Esophagus muscularis mucosa (tissue), 4 donors: ENCODE measurements at regions of chr6 and their contacts with region 1.

Region 1: GRCh38 chr6:99318542-99318941 is 30.9 kb downstream of the FAXC start:
- DNase-seq: no peak
- H3K4me3 ChIP-seq: no peak overlapping the region
- H3K27ac ChIP-seq: no peak overlapping the region
- H3K4me1 ChIP-seq: no peaks in the 10 kb centered on the region
- H3K27me3 ChIP-seq: no peaks in the 10 kb centered on the region
- CTCF ChIP-seq: no peak
- EP300 ChIP-seq: no peak
- POLR2A ChIP-seq: no peak

Region 2: GRCh38 chr6:99270826-99271225 is 47.7 kb before region 1 on chr6:
- intact Hi-C with region 1: no loop called
- DNase-seq: no peak
- H3K4me3 ChIP-seq: no peak overlapping the region
- H3K27ac ChIP-seq: no peak overlapping the region
- H3K4me1 ChIP-seq: peaks cover 0 to 9% (median 7%) of the 10 kb centered on the region in 4 donors
- H3K27me3 ChIP-seq: no peaks in the 10 kb centered on the region
- CTCF ChIP-seq: no peak
- EP300 ChIP-seq: no peak
- POLR2A ChIP-seq: no peak

Region 3: GRCh38 chr6:99709062-99709461 is 390.5 kb after region 1 on chr6:
- intact Hi-C with region 1: loop called (anchors 10 kb)
- DNase-seq: no peak
- H3K4me3 ChIP-seq: no peak overlapping the region
- H3K27ac ChIP-seq: no peak overlapping the region
- H3K4me1 ChIP-seq: no peaks in the 10 kb centered on the region
- H3K27me3 ChIP-seq: no peaks in the 10 kb centered on the region
- CTCF ChIP-seq: no peak
- EP300 ChIP-seq: no peak
- POLR2A ChIP-seq: no peak